A673 (cell line): ENCODE measurements at regions of chr2 and their contacts with region 1.

Region 1: GRCh38 chr2:218406209-218406948 is 6.7 kb downstream of the CTDSP1 start:
- DNase-seq: peak; percentile 97
- H3K4me3 ChIP-seq: peak overlapping the region; percentile 48
- H3K27ac ChIP-seq: peak overlapping the region; percentile 79
- H3K4me1 ChIP-seq: peaks cover 27% of the 10 kb centered on the region
- H3K27me3 ChIP-seq: no peaks in the 10 kb centered on the region
- CTCF ChIP-seq: peak; percentile 83

Region 2: GRCh38 chr2:218286570-218287459 is 119.6 kb before region 1 on chr2:
- CTCF ChIA-PET with region 1: no interaction called
- POLR2A ChIA-PET with region 1: interaction called, 14 read pairs
- intact Hi-C with region 1: no loop called
- DNase-seq: peak; percentile 90
- H3K4me3 ChIP-seq: peak overlapping the region; percentile 37
- H3K27ac ChIP-seq: peak overlapping the region; percentile 82
- H3K4me1 ChIP-seq: peaks cover 25% of the 10 kb centered on the region
- H3K27me3 ChIP-seq: no peaks in the 10 kb centered on the region
- CTCF ChIP-seq: no peak

Region 3: DNA sequence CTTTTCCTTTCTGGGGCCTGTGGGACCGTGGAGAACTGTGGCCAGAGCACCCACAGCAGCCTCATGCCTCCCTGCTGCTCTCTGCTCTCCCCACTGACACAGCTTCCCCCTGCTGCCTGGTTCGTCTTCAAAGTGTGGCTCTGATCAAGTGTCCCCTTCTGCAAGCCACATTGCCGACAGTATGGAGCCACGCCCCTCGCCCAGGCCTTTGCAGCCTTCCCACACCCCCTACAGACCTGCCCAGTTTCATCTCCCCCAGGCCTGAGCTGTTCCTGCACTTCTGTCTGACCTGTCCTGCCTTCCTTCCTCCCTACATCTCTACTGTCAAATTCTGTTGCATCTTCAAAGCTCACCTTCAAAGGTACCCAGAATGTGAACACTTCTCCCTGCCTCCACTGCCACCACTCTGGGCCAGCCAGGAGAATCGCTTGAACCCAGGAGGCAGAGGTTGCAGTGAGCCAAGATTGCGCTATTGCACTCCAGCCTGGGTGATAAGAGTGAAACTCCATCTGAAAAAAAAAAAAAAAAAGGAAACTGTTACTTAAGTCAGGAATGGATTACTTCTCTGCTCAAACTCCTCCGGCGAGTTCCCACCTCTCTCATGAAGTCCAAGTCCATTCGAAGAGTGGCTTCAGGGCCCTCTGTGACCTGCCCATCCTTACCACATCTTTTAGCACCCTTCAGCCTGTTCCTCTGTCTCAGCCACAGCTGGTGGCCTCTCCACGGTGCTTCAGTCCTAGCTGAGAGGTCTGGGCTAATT is 78.7 kb before region 1 on chr2:
- CTCF ChIA-PET with region 1: no interaction called
- POLR2A ChIA-PET with region 1: interaction called, 10 read pairs
- intact Hi-C with region 1: no loop called
- DNase-seq: no peak
- H3K4me3 ChIP-seq: no peak overlapping the region
- H3K27ac ChIP-seq: no peak overlapping the region
- H3K4me1 ChIP-seq: peaks cover 11% of the 10 kb centered on the region
- H3K27me3 ChIP-seq: no peaks in the 10 kb centered on the region
- CTCF ChIP-seq: no peak

Region 4: GRCh38 chr2:218466016-218466521 is 59.7 kb after region 1 on chr2:
- CTCF ChIA-PET with region 1: no interaction called
- POLR2A ChIA-PET with region 1: no interaction called
- intact Hi-C with region 1: loop called (anchors 2 kb)
- DNase-seq: peak; percentile 40
- H3K4me3 ChIP-seq: no peak overlapping the region
- H3K27ac ChIP-seq: no peak overlapping the region
- H3K4me1 ChIP-seq: no peaks in the 10 kb centered on the region
- H3K27me3 ChIP-seq: no peaks in the 10 kb centered on the region
- CTCF ChIP-seq: peak; percentile 68

Region 5: DNA sequence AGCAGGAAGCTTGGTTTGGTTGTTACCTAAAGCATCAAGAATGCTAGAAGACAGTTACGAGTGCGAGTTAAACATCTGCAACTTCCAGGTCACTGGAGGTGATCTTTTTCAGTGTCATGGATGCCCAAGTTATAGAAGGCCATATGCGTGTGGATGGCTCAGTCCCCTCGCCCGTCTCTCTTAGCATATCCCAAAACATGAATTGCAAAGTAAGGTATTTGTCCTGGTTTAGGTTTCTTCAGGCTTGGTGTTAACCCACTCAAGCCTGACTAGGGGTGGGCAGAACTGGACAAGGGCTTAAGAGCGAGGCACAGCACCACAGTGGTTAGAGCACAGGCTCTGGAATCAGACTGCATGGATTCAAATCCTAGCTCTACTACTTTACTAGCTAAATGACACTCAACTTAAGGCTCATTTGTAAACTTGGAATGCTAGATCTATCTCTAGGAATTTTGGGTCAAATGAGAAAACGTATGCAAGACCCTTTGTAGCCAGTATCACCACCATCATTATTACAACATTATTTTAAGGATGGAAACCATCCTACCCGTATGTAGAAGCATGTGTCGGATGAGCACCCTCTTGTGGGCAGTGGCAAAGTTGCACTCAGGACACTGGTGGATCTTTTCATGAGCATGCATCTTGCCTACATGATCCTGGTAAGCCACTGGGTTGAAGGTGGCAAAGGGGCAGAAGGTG is 241.9 kb after region 1 on chr2:
- CTCF ChIA-PET with region 1: no interaction called
- POLR2A ChIA-PET with region 1: no interaction called
- intact Hi-C with region 1: loop called (anchors 5 kb)
- DNase-seq: peak; percentile 72
- H3K4me3 ChIP-seq: no peak overlapping the region
- H3K27ac ChIP-seq: no peak overlapping the region
- H3K4me1 ChIP-seq: no peaks in the 10 kb centered on the region
- H3K27me3 ChIP-seq: no peaks in the 10 kb centered on the region
- CTCF ChIP-seq: peak; percentile 93

Region 6: DNA sequence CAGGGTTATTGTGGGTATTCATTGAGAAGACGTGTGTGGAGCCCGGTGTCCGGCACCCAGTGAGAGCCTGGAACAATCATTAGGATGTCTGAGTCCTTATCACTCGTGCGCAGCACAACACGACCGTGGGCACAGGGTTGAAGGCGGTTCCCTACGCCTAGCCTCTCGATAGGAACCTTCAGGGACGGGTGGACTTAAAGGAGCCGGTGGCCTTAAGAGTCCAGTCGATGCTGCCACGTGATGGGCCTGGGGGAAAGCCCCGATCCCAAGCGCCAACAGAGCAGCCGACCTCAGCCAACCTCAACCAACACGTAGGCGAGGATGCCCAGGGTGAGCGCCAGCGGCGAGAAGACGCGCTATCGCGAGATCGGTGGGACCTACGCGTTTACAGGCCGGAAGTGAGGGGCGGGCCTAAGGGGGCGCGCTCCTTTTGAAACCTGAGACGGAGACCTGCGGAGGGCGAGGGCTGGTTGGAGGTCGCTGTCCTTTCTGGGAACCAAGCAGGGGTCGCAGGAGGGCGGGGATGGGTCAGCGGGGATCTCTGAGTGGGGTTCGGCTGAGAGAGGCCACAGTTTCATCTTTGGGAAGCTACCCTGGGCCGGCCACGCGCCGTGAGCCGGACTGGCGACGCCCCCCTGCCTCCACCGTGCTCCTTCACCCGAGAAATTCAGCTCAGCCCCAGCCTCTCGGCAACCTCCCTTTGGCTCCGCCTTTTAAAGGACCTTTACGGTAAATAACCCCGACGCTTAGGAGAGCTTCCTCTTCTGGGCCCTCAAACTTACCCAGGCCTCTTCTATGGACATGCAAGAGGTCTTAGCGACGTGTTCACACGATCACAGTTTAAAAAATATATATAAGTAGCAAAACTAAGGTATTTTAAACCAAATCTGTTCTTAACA is 502.6 kb after region 1 on chr2:
- CTCF ChIA-PET with region 1: interaction called, 17 read pairs
- POLR2A ChIA-PET with region 1: no interaction called
- intact Hi-C with region 1: no loop called
- DNase-seq: peak; percentile 94
- H3K4me3 ChIP-seq: peak overlapping the region; percentile 56
- H3K27ac ChIP-seq: peak overlapping the region; percentile 68
- H3K4me1 ChIP-seq: peaks cover 9% of the 10 kb centered on the region
- H3K27me3 ChIP-seq: no peaks in the 10 kb centered on the region
- CTCF ChIP-seq: no peak